Caco-2 (cell line): ENCODE measurements at regions of chr20 and their contacts with region 1.

Region 1: GRCh38 chr20:47561180-47561579 is 59.5 kb downstream of the NCOA3 start:
- DNase-seq: no peak
- H3K4me3 ChIP-seq: no peak overlapping the region
- H3K4me3 Mint-ChIP-seq: no peak overlapping the region
- H3K27ac Mint-ChIP-seq: no peak overlapping the region
- H3K4me1 ChIP-seq: peaks cover 18% of the 10 kb centered on the region
- H3K4me1 Mint-ChIP-seq: peaks cover 22% of the 10 kb centered on the region
- H3K27me3 ChIP-seq: no peaks in the 10 kb centered on the region
- H3K27me3 Mint-ChIP-seq: no peaks in the 10 kb centered on the region
- CTCF ChIP-seq: no peak

Region 2: GRCh38 chr20:47212606-47213207 is 348.5 kb before region 1 on chr20:
- CTCF ChIA-PET with region 1: no interaction called
- POLR2A ChIA-PET with region 1: interaction called, 11 read pairs
- intact Hi-C with region 1: no loop called
- DNase-seq: no peak
- H3K4me3 ChIP-seq: no peak overlapping the region
- H3K4me3 Mint-ChIP-seq: no peak overlapping the region
- H3K27ac Mint-ChIP-seq: no peak overlapping the region
- H3K4me1 ChIP-seq: no peaks in the 10 kb centered on the region
- H3K4me1 Mint-ChIP-seq: no peaks in the 10 kb centered on the region
- H3K27me3 ChIP-seq: no peaks in the 10 kb centered on the region
- H3K27me3 Mint-ChIP-seq: no peaks in the 10 kb centered on the region
- CTCF ChIP-seq: no peak

Region 3: GRCh38 chr20:47392015-47392720 is 169.0 kb before region 1 on chr20:
- CTCF ChIA-PET with region 1: no interaction called
- POLR2A ChIA-PET with region 1: no interaction called
- intact Hi-C with region 1: no loop called
- DNase-seq: peak; percentile 68 to 82
- H3K4me3 ChIP-seq: no peak overlapping the region
- H3K4me3 Mint-ChIP-seq: no peak overlapping the region
- H3K27ac Mint-ChIP-seq: peak overlapping the region; percentile 64
- H3K4me1 ChIP-seq: peaks cover 12% of the 10 kb centered on the region
- H3K4me1 Mint-ChIP-seq: peaks cover 21% of the 10 kb centered on the region
- H3K27me3 ChIP-seq: no peaks in the 10 kb centered on the region
- H3K27me3 Mint-ChIP-seq: no peaks in the 10 kb centered on the region
- CTCF ChIP-seq: no peak

Region 4: DNA sequence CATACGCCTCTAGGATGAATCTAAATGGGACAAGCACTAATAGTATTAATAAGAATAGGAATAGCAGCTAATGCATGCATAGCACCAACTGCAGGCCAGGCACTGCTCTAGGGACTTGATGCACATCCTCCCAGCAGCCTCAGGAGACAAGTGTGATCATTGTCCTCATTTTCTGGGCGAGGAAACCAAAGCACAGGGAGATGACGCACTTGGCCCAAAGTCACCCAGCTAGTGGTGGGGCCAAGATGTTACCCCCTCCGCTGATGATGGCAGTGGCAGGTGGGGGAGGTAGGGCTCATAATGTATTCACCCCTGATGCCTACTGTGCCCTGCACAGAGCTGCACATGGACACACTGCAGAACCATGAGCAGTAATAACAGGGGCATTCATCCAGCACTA is 852.3 kb after region 1 on chr20:
- CTCF ChIA-PET with region 1: no interaction called
- POLR2A ChIA-PET with region 1: interaction called, 10 read pairs
- intact Hi-C with region 1: no loop called
- DNase-seq: no peak
- H3K4me3 ChIP-seq: no peak overlapping the region
- H3K4me3 Mint-ChIP-seq: no peak overlapping the region
- H3K27ac Mint-ChIP-seq: no peak overlapping the region
- H3K4me1 ChIP-seq: peaks cover 5% of the 10 kb centered on the region; the same call in 1 of the 2 replicates
- H3K4me1 Mint-ChIP-seq: peaks cover 7% of the 10 kb centered on the region
- H3K27me3 ChIP-seq: no peaks in the 10 kb centered on the region
- H3K27me3 Mint-ChIP-seq: no peaks in the 10 kb centered on the region
- CTCF ChIP-seq: no peak